Psoas muscle (tissue), 8 donors: ENCODE measurements at regions of chr10 and their contacts with region 1.

Region 1: DNA sequence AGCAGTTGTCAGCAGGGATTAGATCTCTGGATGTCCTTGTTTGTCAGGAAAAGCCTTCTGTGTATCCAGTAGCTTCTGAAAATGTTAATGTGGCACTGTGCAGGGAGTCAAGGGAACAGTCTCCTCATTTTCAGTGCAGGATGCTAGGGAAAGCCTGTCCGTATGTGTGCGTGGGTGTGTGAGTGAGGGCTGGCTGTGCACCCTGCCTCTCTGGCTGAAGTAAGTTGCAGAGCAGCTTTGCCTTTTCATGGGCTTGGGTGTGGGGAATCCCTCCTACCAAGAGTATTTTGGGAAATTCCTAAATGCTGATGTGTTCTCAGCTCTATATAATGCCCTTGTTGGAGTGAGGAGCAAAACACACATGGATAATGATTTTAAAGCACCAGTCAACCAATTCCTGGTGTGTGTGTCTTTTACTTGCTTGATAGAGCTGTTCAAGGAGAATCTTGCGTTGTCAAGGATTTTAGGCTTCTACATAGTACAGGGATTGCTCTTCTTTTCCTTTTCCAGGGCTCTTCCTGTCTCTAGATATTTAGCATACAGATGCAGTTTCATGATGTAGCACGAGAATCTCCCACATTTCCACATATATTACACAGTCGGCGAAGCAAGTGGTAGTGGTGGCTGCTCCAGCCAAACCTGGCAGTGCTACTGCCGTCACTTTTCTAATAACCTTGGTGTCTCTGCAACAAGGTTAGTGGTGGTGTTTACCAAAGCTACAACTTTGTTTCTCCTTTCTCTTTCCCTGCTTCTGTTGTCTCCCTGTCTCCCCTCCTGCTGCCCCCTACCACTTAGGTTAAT is 92.8 kb downstream of the MCU start:
- DNase-seq: peak; percentile 40 to 62
- ATAC-seq: peak in 3 of 4 donors; percentile 42 to 68 (median 50)
- H3K4me3 ChIP-seq: no peak overlapping the region
- H3K27ac ChIP-seq: no peak overlapping the region
- H3K4me1 ChIP-seq: peaks cover 40% of the 10 kb centered on the region
- H3K27me3 ChIP-seq: no peaks in the 10 kb centered on the region
- CTCF ChIP-seq: no peak

Region 2: DNA sequence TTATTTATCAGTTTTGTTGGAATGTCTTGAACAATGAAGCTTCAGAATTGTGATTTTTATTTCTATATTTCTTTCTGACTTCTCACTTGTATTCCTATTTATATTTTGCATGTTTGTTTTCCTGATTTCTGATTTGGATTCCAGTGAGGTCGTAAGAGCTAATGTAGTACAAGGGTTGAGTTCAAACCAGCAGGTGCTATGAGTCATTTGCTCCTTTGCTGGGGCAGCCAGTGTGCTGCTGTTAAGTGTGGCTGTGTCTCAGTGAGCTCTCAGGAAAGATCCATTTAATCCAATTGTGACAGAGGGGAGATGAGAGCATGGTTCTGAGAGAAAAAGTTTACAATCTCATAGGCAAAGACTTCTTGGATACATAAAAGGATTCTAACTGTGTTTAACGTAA is 44.2 kb before region 1 on chr10:
- intact Hi-C with region 1: loop called in 1 of 2 experiments (anchors 5 kb)
- DNase-seq: peak; percentile 27 to 69
- ATAC-seq: peak; percentile 92 to 95 (median 94)
- H3K4me3 ChIP-seq: peak overlapping the region; percentile 8
- H3K27ac ChIP-seq: peak overlapping the region; percentile 82
- H3K4me1 ChIP-seq: peaks cover 67% of the 10 kb centered on the region
- H3K27me3 ChIP-seq: no peaks in the 10 kb centered on the region
- CTCF ChIP-seq: no peak

Region 3: GRCh38 chr10:72753760-72754231 is 31.0 kb before region 1 on chr10:
- intact Hi-C with region 1: no loop called
- DNase-seq: no peak
- ATAC-seq: peak in 3 of 4 donors; percentile 11 to 16 (median 12)
- H3K4me3 ChIP-seq: no peak overlapping the region
- H3K27ac ChIP-seq: no peak overlapping the region
- H3K4me1 ChIP-seq: peaks cover 18% of the 10 kb centered on the region
- H3K27me3 ChIP-seq: no peaks in the 10 kb centered on the region
- CTCF ChIP-seq: no peak

Region 4: DNA sequence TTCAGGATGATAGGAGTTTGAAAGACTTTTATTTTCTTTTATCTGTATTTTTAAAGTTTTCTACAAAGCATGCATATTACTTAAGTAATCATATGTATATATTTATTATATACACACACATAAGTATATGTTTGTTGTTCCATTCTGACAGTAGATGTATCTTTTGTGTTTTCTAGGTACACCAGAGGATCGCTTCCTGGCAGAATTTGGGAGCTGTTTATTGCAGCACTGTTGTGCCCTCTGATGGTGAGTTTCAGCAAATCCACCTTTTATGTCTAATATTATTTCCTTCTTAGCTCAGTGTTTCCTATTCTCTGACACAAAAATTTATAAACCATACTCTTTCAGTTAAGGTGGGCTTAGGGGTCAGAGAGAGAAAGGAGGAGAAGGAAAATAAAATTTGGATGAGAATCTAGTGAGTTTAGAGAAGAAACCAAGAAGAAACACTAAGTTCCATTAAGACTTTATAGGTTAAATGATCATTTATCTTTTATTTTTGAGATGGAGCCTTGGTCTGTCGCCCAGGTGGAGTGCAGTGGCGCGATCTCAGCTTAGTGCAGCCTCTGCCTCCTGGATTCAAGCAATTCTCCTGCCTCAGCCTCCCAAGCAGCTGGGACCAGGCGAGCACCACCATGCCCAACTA is 49.6 kb after region 1 on chr10:
- intact Hi-C with region 1: loop called in 1 of 2 experiments (anchors 5 kb)
- DNase-seq: no peak
- ATAC-seq: peak; percentile 37 to 86 (median 75)
- H3K4me3 ChIP-seq: no peak overlapping the region
- H3K27ac ChIP-seq: no peak overlapping the region
- H3K4me1 ChIP-seq: peaks cover 27% of the 10 kb centered on the region
- H3K27me3 ChIP-seq: no peaks in the 10 kb centered on the region
- CTCF ChIP-seq: peak; percentile 63

Region 5: GRCh38 chr10:72875250-72876055 is 90.7 kb after region 1 on chr10:
- intact Hi-C with region 1: no loop called
- DNase-seq: no peak
- ATAC-seq: peak in 2 of 4 donors; percentile 59 to 73
- H3K4me3 ChIP-seq: no peak overlapping the region
- H3K27ac ChIP-seq: no peak overlapping the region
- H3K4me1 ChIP-seq: no peaks in the 10 kb centered on the region
- H3K27me3 ChIP-seq: no peaks in the 10 kb centered on the region
- CTCF ChIP-seq: peak; percentile 49